ENCODE measurements at regions of chr7 and their contacts with region 1.

Region 1: GRCh38 chr7:140924019-140924820 is 509 bp downstream of the BRAF start:
- DNase-seq: peak; percentile 79
- H3K4me3 ChIP-seq: peak overlapping the region; percentile 61 to 100 (median 98)
- H3K27ac ChIP-seq: peak overlapping the region; percentile 94 to 100 (median 98)
- H3K4me1 ChIP-seq: peaks cover 8 to 38% (median 15%) of the 10 kb centered on the region in 4 donors
- H3K27me3 ChIP-seq: no peaks in the 10 kb centered on the region
- CTCF ChIP-seq: peak; percentile 12 to 43 (median 28)
- EP300 ChIP-seq: no peak
- POLR2A ChIP-seq: no peak

Region 2: GRCh38 chr7:140810830-140811556 is 113.2 kb before region 1 on chr7:
- in situ Hi-C with region 1: loop called in 1 of 4 experiments (anchors 10 kb)
- intact Hi-C with region 1: no loop called
- DNase-seq: peak; percentile 50
- H3K4me3 ChIP-seq: no peak overlapping the region
- H3K27ac ChIP-seq: no peak overlapping the region
- H3K4me1 ChIP-seq: peaks cover 0 to 5% (median 0%) of the 10 kb centered on the region in 4 donors
- H3K27me3 ChIP-seq: no peaks in the 10 kb centered on the region
- CTCF ChIP-seq: peak; percentile 65 to 79 (median 73)
- EP300 ChIP-seq: no peak
- POLR2A ChIP-seq: no peak

Measured in transverse colon (tissue), 4 donors.